Mammary epithelial cell (primary cell): ENCODE measurements at regions of chr9 and their contacts with region 1.

Region 1: GRCh38 chr9:5186416-5187169 is 1.2 kb upstream of the INSL6 start:
- DNase-seq: peak; percentile 55
- H3K4me3 ChIP-seq: no peak overlapping the region
- H3K27ac ChIP-seq: no peak overlapping the region
- H3K4me1 ChIP-seq: no peaks in the 10 kb centered on the region
- H3K27me3 ChIP-seq: no peaks in the 10 kb centered on the region
- CTCF ChIP-seq: peak; percentile 71 to 87

Region 2: GRCh38 chr9:4946937-4947336 is 239.7 kb before region 1 on chr9:
- CTCF ChIA-PET with region 1: no interaction called
- dilution Hi-C with region 1: no loop called
- in situ Hi-C with region 1: no loop called
- intact Hi-C with region 1: no loop called
- DNase-seq: no peak
- H3K4me3 ChIP-seq: no peak overlapping the region
- H3K27ac ChIP-seq: no peak overlapping the region
- H3K4me1 ChIP-seq: no peaks in the 10 kb centered on the region
- H3K27me3 ChIP-seq: no peaks in the 10 kb centered on the region
- CTCF ChIP-seq: no peak

Region 3: GRCh38 chr9:5042641-5043277 is 143.8 kb before region 1 on chr9:
- CTCF ChIA-PET with region 1: no interaction called
- dilution Hi-C with region 1: no loop called
- in situ Hi-C with region 1: no loop called
- intact Hi-C with region 1: no loop called
- DNase-seq: no peak
- H3K4me3 ChIP-seq: no peak overlapping the region
- H3K27ac ChIP-seq: no peak overlapping the region
- H3K4me1 ChIP-seq: no peaks in the 10 kb centered on the region
- H3K27me3 ChIP-seq: no peaks in the 10 kb centered on the region
- CTCF ChIP-seq: no peak

Region 4: GRCh38 chr9:5263351-5264218 is 77.0 kb after region 1 on chr9:
- CTCF ChIA-PET with region 1: no interaction called
- dilution Hi-C with region 1: no loop called
- in situ Hi-C with region 1: no loop called
- intact Hi-C with region 1: loop called (anchors 5 kb)
- DNase-seq: peak; percentile 25
- H3K4me3 ChIP-seq: no peak overlapping the region
- H3K27ac ChIP-seq: no peak overlapping the region
- H3K4me1 ChIP-seq: peaks cover 2% of the 10 kb centered on the region
- H3K27me3 ChIP-seq: no peaks in the 10 kb centered on the region
- CTCF ChIP-seq: peak; percentile 4 to 41

Region 5: GRCh38 chr9:5425006-5425628 is 238.5 kb after region 1 on chr9:
- CTCF ChIA-PET with region 1: no interaction called
- dilution Hi-C with region 1: no loop called
- in situ Hi-C with region 1: loop called in 1 of 2 experiments (anchors 25 kb)
- intact Hi-C with region 1: loop called (anchors 1 kb)
- DNase-seq: peak; percentile 34
- H3K4me3 ChIP-seq: no peak overlapping the region
- H3K27ac ChIP-seq: no peak overlapping the region
- H3K4me1 ChIP-seq: no peaks in the 10 kb centered on the region
- H3K27me3 ChIP-seq: no peaks in the 10 kb centered on the region
- CTCF ChIP-seq: peak; percentile 46 to 60